Caco-2 (cell line): ENCODE measurements at regions of chr22 and their contacts with region 1.

Region 1: DNA sequence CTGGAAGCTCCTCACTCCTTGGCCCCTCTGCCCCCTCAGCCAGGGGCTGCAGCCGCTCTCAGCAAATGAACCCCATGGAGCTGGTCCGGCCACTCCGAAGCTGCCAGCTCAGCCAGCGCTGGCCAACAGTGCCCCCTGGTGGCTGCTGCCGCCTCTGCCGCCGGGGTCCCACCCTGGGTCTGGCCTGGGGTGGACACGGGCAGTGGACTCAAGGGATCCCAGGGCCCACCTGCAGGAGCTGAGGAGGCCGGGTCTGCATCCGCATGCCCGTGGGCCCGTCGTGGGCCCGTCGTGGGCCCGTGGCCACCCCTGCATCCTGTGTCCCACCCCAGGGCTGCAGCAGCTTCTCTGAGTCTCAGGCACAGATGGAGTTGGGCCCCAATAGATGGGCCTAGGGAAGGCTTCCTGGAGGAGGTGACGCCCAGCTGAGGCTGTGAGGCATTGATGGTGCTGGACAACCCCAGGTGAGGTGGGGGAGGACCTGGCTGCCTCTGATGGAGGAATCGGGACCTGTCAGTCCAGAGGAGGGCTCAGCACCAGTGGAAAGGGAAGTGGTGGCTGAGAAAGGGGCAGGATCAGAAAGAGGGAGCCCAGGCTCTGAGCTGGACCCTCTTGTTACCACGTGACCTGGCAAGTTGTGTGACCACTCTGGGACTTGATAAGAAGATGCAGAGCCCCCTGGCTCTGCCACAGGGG is 522.3 kb downstream of the BRD1 start:
- DNase-seq: peak; percentile 59 to 86
- H3K4me3 ChIP-seq: no peak overlapping the region
- H3K4me3 Mint-ChIP-seq: no peak overlapping the region
- H3K27ac Mint-ChIP-seq: no peak overlapping the region
- H3K4me1 ChIP-seq: no peaks in the 10 kb centered on the region
- H3K4me1 Mint-ChIP-seq: no peaks in the 10 kb centered on the region
- H3K27me3 ChIP-seq: no peaks in the 10 kb centered on the region; the same call in 1 of the 2 replicates
- H3K27me3 Mint-ChIP-seq: peaks cover 31% of the 10 kb centered on the region
- CTCF ChIP-seq: peak; percentile 88 to 92

Region 2: GRCh38 chr22:49046546-49047361 is 258.6 kb before region 1 on chr22:
- CTCF ChIA-PET with region 1: interaction called, 18 read pairs
- POLR2A ChIA-PET with region 1: no interaction called
- intact Hi-C with region 1: loop called (anchors 1 kb)
- DNase-seq: peak; percentile 57 to 59
- H3K4me3 ChIP-seq: no peak overlapping the region
- H3K4me3 Mint-ChIP-seq: no peak overlapping the region
- H3K27ac Mint-ChIP-seq: no peak overlapping the region
- H3K4me1 ChIP-seq: no peaks in the 10 kb centered on the region
- H3K4me1 Mint-ChIP-seq: no peaks in the 10 kb centered on the region
- H3K27me3 ChIP-seq: no peaks in the 10 kb centered on the region; the same call in 1 of the 2 replicates
- H3K27me3 Mint-ChIP-seq: peaks cover 27% of the 10 kb centered on the region
- CTCF ChIP-seq: peak; percentile 51 to 54

Region 3: DNA sequence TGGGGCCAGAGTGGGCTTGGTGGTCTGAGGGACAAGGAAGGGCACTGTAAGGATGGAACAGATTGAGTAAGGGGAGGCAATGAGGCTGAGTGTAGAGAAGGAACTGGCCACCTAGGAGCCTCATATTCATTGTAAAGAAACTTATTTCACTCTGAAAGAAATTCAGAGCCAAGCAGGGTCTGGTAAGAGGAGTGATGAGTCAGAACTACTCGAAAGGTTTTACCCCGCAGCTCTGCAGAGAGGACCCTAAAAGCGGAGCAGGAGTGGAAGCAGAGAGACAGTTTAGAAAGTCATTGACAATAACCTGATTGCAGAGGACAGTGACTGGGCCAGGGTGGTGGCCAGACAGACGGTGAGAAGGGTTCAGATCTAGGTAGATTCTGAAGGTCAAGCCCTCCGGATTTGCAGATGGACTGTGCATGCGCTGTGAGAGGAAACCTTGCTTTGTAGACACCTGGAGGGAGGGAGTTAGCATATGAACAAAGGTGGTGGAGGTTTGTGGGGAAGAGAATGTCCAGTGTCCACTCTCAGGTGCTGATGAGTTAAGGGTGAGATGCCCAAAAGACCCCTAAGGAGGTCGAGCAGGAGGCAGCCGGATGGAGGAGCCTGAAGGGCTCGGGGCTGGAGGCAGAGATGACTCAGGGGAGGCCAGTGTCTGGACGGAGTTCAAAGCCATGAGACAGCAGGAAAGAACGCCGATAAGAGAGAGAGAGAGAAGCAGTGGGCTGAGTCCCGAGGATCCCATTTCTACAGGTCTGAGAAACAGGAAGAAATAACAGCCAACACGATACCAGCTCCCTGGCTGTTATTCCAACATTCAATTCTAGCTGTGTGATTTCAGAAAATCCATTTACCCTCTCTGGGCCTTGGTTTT is 23.7 kb before region 1 on chr22:
- CTCF ChIA-PET with region 1: no interaction called
- POLR2A ChIA-PET with region 1: no interaction called
- intact Hi-C with region 1: no loop called
- DNase-seq: no peak
- H3K4me3 ChIP-seq: no peak overlapping the region
- H3K4me3 Mint-ChIP-seq: no peak overlapping the region
- H3K27ac Mint-ChIP-seq: no peak overlapping the region
- H3K4me1 ChIP-seq: no peaks in the 10 kb centered on the region
- H3K4me1 Mint-ChIP-seq: no peaks in the 10 kb centered on the region
- H3K27me3 ChIP-seq: no peaks in the 10 kb centered on the region
- H3K27me3 Mint-ChIP-seq: peaks cover 51% of the 10 kb centered on the region
- CTCF ChIP-seq: no peak